ENCODE measurements at regions of chr11 and their contacts with region 1.

Region 1: GRCh38 chr11:14907411-14908213 is 15.6 kb upstream of the CYP2R1 start:
- H3K4me3 ChIP-seq: no peak overlapping the region
- H3K27ac ChIP-seq: no peak overlapping the region
- H3K4me1 ChIP-seq: no peaks in the 10 kb centered on the region
- CTCF ChIP-seq: peak; percentile 64

Region 2: GRCh38 chr11:14623036-14623435 is 284.6 kb before region 1 on chr11:
- CTCF ChIA-PET with region 1: interaction called, 19 read pairs
- POLR2A ChIA-PET with region 1: no interaction called
- H3K4me3 ChIP-seq: no peak overlapping the region
- H3K27ac ChIP-seq: no peak overlapping the region
- H3K4me1 ChIP-seq: no peaks in the 10 kb centered on the region
- CTCF ChIP-seq: no peak

Region 3: DNA sequence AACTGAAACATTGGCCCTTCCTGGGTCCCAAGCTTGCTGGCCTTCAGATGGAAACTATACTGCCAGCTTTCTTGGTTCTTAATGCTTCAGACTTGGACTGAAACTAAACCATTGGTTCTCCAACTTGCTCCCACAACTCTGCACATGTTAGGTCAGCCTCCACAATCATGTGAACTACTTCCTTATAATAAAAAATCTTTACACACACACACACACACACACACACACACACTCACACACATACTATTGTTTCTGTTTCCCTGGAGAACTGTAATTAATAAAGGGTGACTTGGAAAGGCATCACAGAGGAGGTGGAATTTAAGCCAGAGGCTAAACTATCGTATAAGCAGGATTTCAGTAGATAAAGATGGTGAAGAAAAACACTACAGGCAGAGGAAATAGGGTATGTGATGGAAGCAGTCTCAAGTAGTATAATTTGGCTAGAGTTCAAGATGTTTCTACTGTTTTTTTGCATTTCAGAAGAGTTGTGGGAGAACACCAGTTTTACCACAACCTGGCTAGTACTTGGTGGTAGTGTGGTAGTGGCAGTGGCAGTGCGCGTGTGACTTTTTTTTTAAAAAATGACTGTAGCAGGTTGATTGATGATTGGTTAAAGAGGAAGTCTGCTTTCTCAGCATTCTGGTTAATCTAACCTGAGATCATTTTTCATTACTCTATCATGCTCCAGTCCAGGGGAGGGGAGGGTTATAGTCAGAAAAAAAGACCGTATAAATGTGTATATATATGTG is 193.9 kb before region 1 on chr11:
- CTCF ChIA-PET with region 1: no interaction called
- POLR2A ChIA-PET with region 1: no interaction called
- H3K4me3 ChIP-seq: no peak overlapping the region
- H3K27ac ChIP-seq: no peak overlapping the region
- H3K4me1 ChIP-seq: no peaks in the 10 kb centered on the region
- CTCF ChIP-seq: no peak

Region 4: DNA sequence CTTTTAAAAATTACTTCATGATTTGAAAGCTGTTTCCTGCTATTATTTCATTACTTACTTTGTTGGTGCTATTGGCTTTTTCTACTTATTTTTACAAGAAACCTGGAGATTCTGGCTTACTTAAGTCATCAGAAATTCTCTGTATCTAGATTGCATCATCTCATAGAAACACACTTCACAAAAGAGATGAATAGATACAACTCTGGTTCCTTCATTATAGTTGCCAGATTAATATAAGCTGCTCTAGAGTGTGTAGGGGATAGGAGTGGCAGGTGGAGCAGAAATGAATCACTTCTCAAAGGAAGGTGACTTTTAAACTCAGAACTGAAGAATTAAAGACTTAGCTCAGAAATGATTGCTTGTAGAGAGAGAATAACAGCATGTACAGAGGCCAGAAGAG is 35.6 kb before region 1 on chr11:
- CTCF ChIA-PET with region 1: no interaction called
- POLR2A ChIA-PET with region 1: no interaction called
- H3K4me3 ChIP-seq: no peak overlapping the region
- H3K27ac ChIP-seq: no peak overlapping the region
- H3K4me1 ChIP-seq: no peaks in the 10 kb centered on the region
- CTCF ChIP-seq: no peak

Region 5: DNA sequence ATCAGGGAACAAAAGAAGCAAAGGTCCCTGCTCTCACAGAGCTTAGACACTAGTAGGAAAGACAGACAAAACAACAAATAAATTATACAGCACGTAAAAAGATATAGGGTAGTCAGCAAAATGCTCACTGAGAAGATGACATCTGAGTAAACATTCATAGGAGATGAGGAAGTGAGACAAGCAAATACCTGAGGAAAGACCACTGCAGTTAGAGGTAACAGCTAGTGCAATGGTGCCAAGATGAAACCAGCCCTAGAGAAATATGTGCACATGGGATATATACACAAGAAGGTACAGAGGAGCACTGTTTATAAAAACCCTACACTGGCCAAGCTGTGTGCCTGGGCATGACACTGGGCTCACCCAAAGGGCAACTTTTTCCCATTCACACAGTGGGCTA is 25.4 kb before region 1 on chr11:
- CTCF ChIA-PET with region 1: interaction called, 18 read pairs
- POLR2A ChIA-PET with region 1: no interaction called
- H3K4me3 ChIP-seq: no peak overlapping the region
- H3K27ac ChIP-seq: no peak overlapping the region
- H3K4me1 ChIP-seq: no peaks in the 10 kb centered on the region
- CTCF ChIP-seq: no peak

Region 6: GRCh38 chr11:14927146-14927545 is 19.5 kb after region 1 on chr11:
- CTCF ChIA-PET with region 1: interaction called, 40 read pairs
- POLR2A ChIA-PET with region 1: no interaction called
- H3K4me3 ChIP-seq: no peak overlapping the region
- H3K27ac ChIP-seq: no peak overlapping the region
- H3K4me1 ChIP-seq: no peaks in the 10 kb centered on the region
- CTCF ChIP-seq: no peak

Region 7: GRCh38 chr11:15006139-15006759 is 98.6 kb after region 1 on chr11:
- CTCF ChIA-PET with region 1: interaction called, 59 read pairs
- POLR2A ChIA-PET with region 1: no interaction called
- H3K4me3 ChIP-seq: no peak overlapping the region
- H3K27ac ChIP-seq: no peak overlapping the region
- H3K4me1 ChIP-seq: no peaks in the 10 kb centered on the region
- CTCF ChIP-seq: no peak

Region 8: GRCh38 chr11:15074206-15075161 is 166.9 kb after region 1 on chr11:
- CTCF ChIA-PET with region 1: interaction called, 143 read pairs
- POLR2A ChIA-PET with region 1: interaction called, 12 read pairs
- H3K4me3 ChIP-seq: peak overlapping the region; percentile 38
- H3K27ac ChIP-seq: no peak overlapping the region; the same call in 1 of the 2 replicates
- H3K4me1 ChIP-seq: no peaks in the 10 kb centered on the region
- CTCF ChIP-seq: peak; percentile 86

Region 9: GRCh38 chr11:15208378-15209222 is 301.0 kb after region 1 on chr11:
- CTCF ChIA-PET with region 1: interaction called, 17 read pairs
- POLR2A ChIA-PET with region 1: no interaction called
- H3K4me3 ChIP-seq: no peak overlapping the region
- H3K27ac ChIP-seq: no peak overlapping the region
- H3K4me1 ChIP-seq: no peaks in the 10 kb centered on the region
- CTCF ChIP-seq: peak; percentile 86

Region 10: GRCh38 chr11:15248749-15249148 is 341.1 kb after region 1 on chr11:
- CTCF ChIA-PET with region 1: no interaction called
- POLR2A ChIA-PET with region 1: no interaction called
- H3K4me3 ChIP-seq: no peak overlapping the region
- H3K27ac ChIP-seq: no peak overlapping the region
- H3K4me1 ChIP-seq: no peaks in the 10 kb centered on the region
- CTCF ChIP-seq: no peak